ENCODE measurements at regions of chr16 and their contacts with region 1.

Region 1: GRCh38 chr16:4550591-4550990 is 5.5 kb upstream of the C16orf96 start:
- DNase-seq: no peak
- CTCF ChIP-seq: no peak

Region 2: DNA sequence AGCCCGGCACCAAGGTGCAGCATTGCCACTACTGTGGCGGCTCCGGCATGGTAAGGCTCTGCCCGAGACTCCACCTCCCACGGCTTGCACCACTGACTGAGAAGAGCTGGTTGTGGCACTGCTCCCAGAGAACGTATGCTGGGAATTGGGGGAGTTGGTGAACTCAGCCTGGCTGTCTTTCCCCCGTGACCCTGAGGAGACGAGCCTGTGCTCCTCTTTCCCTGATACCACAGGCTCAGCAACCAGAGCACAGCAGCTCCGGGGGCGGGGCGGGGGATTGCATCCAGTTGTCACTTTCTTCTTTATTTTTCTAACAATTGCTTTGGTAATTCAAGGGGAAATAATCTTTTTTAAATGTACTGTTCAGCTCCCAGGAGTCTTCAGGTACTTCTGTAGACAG is 108.2 kb before region 1 on chr16:
- CTCF ChIA-PET with region 1: no interaction called
- POLR2A ChIA-PET with region 1: no interaction called
- DNase-seq: no peak
- CTCF ChIP-seq: no peak

Region 3: DNA sequence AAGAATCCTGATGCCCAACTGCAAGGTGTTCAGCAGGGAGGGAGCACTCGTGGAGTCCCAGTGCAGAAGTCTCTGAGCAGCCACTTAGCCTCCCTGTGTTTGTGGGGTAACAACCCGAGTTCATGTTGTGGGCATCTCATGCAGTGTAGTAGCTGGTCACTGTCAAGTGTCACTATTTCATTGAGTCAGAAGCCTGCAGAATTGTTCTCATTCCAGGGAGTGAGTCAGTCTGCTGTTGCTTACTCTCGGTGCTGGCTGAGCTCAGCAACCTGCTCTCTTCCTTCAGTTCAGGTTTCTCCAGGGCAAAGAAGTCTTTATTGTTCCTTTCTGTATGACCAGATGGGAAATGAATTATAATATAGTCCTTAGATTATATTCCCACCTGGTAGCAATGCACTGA is 50.3 kb before region 1 on chr16:
- CTCF ChIA-PET with region 1: interaction called, 138 read pairs
- POLR2A ChIA-PET with region 1: no interaction called
- DNase-seq: no peak
- CTCF ChIP-seq: no peak

Region 4: DNA sequence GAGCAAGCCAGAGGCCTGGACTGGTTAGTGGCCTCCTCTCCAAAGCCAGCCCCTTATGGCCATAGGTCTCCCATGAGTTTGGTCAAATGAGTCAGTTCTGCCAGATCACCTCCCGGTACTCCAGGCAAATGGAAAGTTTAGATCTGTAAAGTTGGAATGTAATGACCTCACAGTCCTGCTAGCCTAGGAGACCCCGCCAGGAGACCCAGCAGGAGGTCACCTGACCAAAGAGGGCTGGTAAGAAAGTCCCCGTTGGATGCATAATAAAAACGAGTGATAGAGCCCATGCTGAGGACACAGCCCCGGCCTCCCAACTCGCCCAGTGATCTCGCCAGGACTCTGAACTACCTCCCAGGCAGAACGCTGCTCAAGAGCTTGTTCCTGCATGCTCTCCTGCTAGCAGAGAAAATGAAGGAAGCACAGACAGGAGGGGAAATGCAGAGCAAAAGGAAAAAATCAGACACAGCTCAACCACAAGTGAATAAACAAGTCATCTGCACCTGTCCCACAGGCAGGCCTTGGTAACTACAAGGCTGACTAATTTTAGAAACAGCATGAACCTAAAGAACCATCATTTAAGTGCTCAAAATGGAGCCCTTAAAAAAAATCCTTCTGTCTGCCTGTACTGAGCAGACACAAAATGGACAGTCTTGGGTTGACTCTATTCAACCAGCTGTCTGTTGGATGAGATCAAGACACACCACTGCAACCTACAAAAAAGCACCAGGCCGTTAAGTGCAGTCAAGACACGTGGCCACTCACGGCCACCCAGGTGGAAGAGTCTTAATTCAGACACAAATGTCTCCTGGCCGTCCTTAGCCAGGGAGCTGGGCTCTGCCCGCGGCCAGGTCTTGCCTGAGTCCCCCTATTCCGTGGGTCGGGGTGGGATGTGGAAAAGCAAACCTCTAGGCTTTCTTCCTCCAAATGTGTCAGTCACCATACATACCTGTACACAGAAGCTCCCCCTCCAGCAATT is 21.2 kb before region 1 on chr16:
- CTCF ChIA-PET with region 1: interaction called, 21 read pairs
- POLR2A ChIA-PET with region 1: no interaction called
- DNase-seq: peak; percentile 61
- CTCF ChIP-seq: no peak

Region 5: DNA sequence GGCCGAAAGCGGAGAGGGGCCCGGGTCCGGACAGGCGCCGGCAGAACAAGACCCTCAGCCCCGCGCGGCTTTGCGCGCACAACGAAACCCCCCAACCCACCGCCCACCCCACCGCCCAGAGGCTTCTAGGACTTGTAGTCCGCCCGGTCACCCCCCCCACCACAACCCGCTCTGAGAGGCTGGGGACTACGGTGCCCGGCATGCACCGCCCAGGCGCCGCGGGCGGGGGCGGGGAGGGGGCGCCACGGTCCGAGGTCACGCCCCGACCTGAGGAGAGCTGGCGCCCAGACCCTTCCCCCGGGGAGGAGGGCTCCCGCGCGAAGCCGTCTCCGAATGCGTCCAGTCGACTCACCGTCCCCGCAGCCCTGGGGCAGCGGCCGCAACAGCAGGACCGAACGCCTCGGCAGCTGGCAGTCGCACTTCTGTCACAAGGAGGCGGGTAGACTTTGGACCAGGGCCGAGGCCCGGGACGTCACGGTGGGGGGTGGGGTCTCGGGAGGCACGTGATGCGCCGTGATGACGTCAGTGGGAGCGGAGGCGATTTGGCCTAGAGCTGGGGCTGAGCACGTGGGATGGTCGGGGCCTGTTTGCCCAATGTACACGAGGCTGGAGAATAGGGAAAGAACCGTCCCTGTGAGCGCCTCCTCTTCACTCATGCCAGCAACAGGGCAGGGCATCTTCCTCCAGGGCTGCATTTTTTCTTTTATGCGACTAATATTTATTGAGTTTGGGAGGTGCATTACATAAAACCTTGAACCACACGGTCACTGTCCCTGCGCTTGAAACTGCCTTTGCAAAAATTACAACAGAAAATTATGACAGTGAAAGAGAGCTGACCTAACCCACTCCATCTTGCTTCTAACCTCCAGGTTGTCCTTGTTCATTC is 12.0 kb before region 1 on chr16 and contains the start of gene CDIP1:
- CTCF ChIA-PET with region 1: interaction called, 20 read pairs
- POLR2A ChIA-PET with region 1: no interaction called
- DNase-seq: peak; percentile 96
- CTCF ChIP-seq: no peak

Measured in GM10248 (cell line).